ENCODE measurements at regions of chr21 and their contacts with region 1.

Region 1: DNA sequence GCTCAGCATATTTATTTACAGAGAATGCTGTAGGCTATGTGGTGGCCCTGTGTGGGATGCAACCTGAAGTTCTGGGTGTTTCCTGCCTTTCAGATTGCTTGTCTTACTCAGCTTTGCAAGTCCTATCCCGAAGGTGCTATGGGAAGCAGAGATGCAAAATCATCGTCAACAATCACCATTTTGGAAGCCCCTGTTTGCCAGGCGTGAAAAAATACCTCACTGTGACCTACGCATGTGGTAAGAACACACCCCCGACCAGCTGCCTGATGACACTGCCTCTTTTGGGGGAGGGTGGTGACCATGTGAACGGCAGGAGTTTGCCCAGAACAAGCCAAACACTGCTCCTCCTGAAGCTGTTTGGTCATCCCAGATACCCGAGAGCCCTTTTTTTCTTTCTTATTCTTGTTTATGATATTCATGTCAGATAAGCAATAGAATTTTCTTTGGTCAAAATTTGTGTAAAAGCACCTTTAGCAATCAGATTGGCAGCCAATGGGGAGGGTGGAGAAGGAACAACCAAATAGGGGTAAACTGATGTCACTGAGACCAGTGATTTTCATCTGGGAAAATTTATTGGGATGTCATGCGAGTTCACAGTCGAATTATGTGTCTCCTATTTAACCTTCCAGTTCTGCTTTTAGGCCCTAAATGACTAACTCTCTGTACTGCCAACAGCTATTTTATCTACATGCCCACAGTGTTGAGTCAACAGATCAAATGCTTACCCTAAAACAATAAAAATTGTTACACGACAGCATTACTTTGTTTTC is 82.6 kb downstream of the EVA1C start:
- DNase-seq: no peak
- ATAC-seq: peak in 1 of 3 donors; percentile 25
- H3K4me3 ChIP-seq: no peak overlapping the region
- H3K4me3 Mint-ChIP-seq: no peak overlapping the region
- H3K27ac ChIP-seq: no peak overlapping the region
- H3K27ac Mint-ChIP-seq: no peak overlapping the region
- H3K4me1 ChIP-seq: peaks cover 12% of the 10 kb centered on the region
- H3K4me1 Mint-ChIP-seq: peaks cover 6 to 11% of the 10 kb centered on the region in 2 donors
- H3K27me3 ChIP-seq: no peaks in the 10 kb centered on the region
- H3K27me3 Mint-ChIP-seq: no peaks in the 10 kb centered on the region
- CTCF ChIP-seq: no peak

Region 2: GRCh38 chr21:32412162-32413014 is 82.7 kb before region 1 on chr21 and contains the start of gene EVA1C:
- intact Hi-C with region 1: loop called (anchors 10 kb)
- DNase-seq: peak; percentile 60 to 88
- ATAC-seq: peak; percentile 62 to 68 (median 64)
- H3K4me3 ChIP-seq: peak within 1 kb of the TSS; percentile 83
- H3K4me3 Mint-ChIP-seq: peak within 1 kb of the TSS; percentile 97
- H3K27ac ChIP-seq: peak within 1 kb of the TSS; percentile 94
- H3K27ac Mint-ChIP-seq: peak within 1 kb of the TSS; percentile 80 to 90
- H3K4me1 ChIP-seq: peaks cover 49% of the 10 kb centered on the region
- H3K4me1 Mint-ChIP-seq: peaks cover 60 to 77% of the 10 kb centered on the region in 2 donors
- H3K27me3 ChIP-seq: no peaks in the 10 kb centered on the region
- H3K27me3 Mint-ChIP-seq: peaks cover 0 to 2% of the 10 kb centered on the region in 2 donors
- CTCF ChIP-seq: no peak
- total RNA-seq, gene EVA1C: 14.7 to 27.8 (median 15.8) TPM

Region 3: GRCh38 chr21:32538147-32538792 is 43.2 kb after region 1 on chr21:
- intact Hi-C with region 1: loop called (anchors 1 kb)
- DNase-seq: peak; percentile 53 to 65
- ATAC-seq: peak; percentile 90 to 99 (median 95)
- H3K4me3 ChIP-seq: no peak overlapping the region
- H3K4me3 Mint-ChIP-seq: peak overlapping the region; percentile 76
- H3K27ac ChIP-seq: peak overlapping the region; percentile 44
- H3K27ac Mint-ChIP-seq: peak overlapping the region; percentile 65 to 75
- H3K4me1 ChIP-seq: peaks cover 37% of the 10 kb centered on the region
- H3K4me1 Mint-ChIP-seq: peaks cover 37 to 43% of the 10 kb centered on the region in 2 donors
- H3K27me3 ChIP-seq: no peaks in the 10 kb centered on the region
- H3K27me3 Mint-ChIP-seq: no peaks in the 10 kb centered on the region
- CTCF ChIP-seq: no peak

Region 4: DNA sequence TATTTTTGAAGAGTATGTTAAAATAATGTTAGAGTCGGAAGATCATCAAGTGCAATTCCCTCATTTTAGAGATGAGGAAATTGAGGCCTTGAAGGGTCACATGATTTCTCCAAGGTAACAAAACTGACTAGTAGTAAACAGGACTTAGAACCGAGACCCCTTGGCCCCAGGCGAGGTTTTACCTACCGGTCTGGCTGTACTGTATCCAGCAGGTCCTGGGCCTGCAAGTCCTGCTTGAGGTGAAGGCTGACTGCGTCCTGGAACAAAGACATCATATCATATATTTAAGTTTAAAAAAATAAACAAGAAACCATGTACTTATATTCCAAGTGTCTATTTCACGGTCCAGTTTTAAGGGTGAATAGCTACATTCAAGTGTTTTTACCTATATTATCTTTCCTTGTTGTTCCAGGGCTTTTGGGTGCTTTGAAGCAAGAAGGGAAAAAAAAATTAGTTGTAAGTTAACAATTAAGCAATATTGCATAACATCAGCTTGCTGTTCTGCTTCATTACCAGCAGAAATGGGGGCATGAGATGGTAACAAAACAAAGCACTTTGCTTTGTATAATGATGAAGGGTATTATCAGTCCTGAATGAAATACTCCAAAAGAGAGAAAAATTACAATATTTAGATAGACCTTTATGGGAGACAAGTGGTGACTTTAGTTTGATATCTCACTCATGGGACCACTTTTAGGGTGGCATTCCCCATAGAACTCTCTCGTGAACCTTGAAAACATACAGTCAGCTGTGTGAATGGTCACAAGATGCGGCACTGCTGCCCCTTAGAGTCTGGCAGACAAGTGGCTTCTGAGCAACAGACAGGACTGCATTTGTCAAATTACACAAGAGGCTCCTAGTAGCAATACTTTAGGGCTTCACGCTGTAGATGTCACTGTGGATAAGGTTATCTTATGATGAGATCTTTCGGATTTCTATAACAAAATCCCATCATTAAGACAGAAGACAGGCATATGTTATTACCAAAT is 146.9 kb after region 1 on chr21:
- intact Hi-C with region 1: no loop called
- DNase-seq: no peak
- ATAC-seq: no peak
- H3K4me3 ChIP-seq: no peak overlapping the region
- H3K4me3 Mint-ChIP-seq: no peak overlapping the region
- H3K27ac ChIP-seq: no peak overlapping the region
- H3K27ac Mint-ChIP-seq: no peak overlapping the region
- H3K4me1 ChIP-seq: no peaks in the 10 kb centered on the region
- H3K4me1 Mint-ChIP-seq: no peaks in the 10 kb centered on the region
- H3K27me3 ChIP-seq: no peaks in the 10 kb centered on the region
- H3K27me3 Mint-ChIP-seq: no peaks in the 10 kb centered on the region
- CTCF ChIP-seq: no peak

Measured in natural killer cell (primary cell).